A673 (cell line): ENCODE measurements at regions of chr1 and their contacts with region 1.

Region 1: GRCh38 chr1:77143529-77144121 is 75.6 kb downstream of the PIGK start:
- DNase-seq: peak; percentile 18
- H3K4me3 ChIP-seq: no peak overlapping the region
- H3K27ac ChIP-seq: no peak overlapping the region
- H3K4me1 ChIP-seq: peaks cover 4% of the 10 kb centered on the region
- H3K27me3 ChIP-seq: no peaks in the 10 kb centered on the region
- CTCF ChIP-seq: peak; percentile 63

Region 2: DNA sequence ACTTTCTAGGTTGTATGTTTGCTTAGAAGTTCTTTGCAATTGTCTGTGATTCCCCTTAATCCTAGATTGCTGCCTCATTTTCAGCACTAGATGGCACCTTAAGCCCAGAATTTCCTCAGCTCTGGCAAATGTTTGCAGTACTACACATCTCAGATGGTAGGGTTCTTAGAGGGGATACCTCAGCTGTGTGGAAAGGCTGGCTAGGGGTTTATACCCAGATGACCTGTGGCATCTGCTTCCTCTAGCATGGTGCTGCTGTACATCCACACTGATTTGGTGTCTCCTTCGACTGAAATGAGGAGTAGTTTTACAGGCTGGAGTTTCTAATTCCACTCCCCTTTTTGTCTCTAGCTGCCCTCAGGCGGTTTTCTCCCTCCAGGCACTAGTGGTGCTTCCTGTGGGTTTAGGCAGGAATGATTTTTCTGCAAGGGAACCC is 1234.9 kb before region 1 on chr1:
- CTCF ChIA-PET with region 1: no interaction called
- POLR2A ChIA-PET with region 1: no interaction called
- intact Hi-C with region 1: loop called (anchors 5 kb)
- DNase-seq: peak; percentile 62
- H3K4me3 ChIP-seq: no peak overlapping the region
- H3K27ac ChIP-seq: no peak overlapping the region
- H3K4me1 ChIP-seq: no peaks in the 10 kb centered on the region
- H3K27me3 ChIP-seq: no peaks in the 10 kb centered on the region
- CTCF ChIP-seq: peak; percentile 68

Region 3: DNA sequence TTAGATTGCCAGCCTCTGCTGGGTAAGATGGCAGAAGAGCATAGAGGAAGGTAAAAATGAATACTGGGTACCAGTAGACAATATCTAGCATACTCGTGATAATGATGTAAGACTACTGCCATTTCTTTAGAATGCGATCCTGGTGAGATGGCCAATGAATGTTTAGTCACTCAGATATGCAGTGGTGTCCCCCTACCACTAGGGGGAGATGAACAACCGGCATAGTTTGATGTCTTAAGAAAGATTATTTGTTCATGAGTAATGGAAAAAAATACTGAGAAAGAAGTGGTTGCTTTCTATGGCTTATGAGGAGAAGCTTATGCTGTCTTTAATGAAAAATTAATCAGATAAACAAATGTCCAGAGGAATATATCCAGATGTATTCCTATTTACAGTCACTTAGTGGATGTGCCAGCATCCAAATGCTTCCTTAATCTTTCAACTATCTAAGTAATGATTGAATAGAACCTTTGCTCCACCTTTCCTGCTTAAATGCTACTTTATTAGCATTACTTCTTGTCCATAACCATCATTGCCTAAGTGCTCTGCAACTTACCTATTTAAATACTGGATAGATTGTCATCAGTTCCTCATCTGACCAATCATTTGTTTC is 812.5 kb before region 1 on chr1:
- CTCF ChIA-PET with region 1: no interaction called
- POLR2A ChIA-PET with region 1: no interaction called
- intact Hi-C with region 1: loop called (anchors 5 kb)
- DNase-seq: peak; percentile 81
- H3K4me3 ChIP-seq: no peak overlapping the region
- H3K27ac ChIP-seq: no peak overlapping the region
- H3K4me1 ChIP-seq: no peaks in the 10 kb centered on the region
- H3K27me3 ChIP-seq: no peaks in the 10 kb centered on the region
- CTCF ChIP-seq: peak; percentile 96

Region 4: DNA sequence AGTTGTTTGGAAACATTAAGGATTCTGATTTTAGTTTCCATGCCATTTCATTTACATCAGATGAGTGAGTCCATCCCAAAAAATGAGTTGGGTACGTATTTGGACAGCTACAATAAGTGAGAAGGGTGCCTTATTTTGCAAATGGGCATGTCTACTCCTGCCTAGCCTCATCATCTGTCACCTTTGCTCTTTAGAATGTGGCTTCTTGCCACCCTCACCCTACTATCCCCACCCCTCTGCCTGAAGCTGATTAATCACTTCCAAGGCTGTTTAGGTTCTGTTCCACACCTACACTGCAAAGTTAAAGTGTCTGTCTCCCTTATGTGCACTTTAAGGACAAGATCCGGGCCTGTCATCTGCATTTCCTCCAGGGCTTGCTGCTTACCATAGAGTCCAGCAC is 215.1 kb before region 1 on chr1:
- CTCF ChIA-PET with region 1: no interaction called
- POLR2A ChIA-PET with region 1: no interaction called
- intact Hi-C with region 1: no loop called
- DNase-seq: no peak
- H3K4me3 ChIP-seq: no peak overlapping the region
- H3K27ac ChIP-seq: no peak overlapping the region
- H3K4me1 ChIP-seq: no peaks in the 10 kb centered on the region
- H3K27me3 ChIP-seq: peaks cover 36% of the 10 kb centered on the region
- CTCF ChIP-seq: no peak

Region 5: GRCh38 chr1:77126307-77126706 is 17.3 kb before region 1 on chr1:
- CTCF ChIA-PET with region 1: no interaction called
- POLR2A ChIA-PET with region 1: no interaction called
- intact Hi-C with region 1: no loop called
- DNase-seq: peak; percentile 68
- H3K4me3 ChIP-seq: no peak overlapping the region
- H3K27ac ChIP-seq: no peak overlapping the region
- H3K4me1 ChIP-seq: no peaks in the 10 kb centered on the region
- H3K27me3 ChIP-seq: no peaks in the 10 kb centered on the region
- CTCF ChIP-seq: peak; percentile 67

Region 6: GRCh38 chr1:77533660-77534305 is 390.2 kb after region 1 on chr1:
- CTCF ChIA-PET with region 1: no interaction called
- POLR2A ChIA-PET with region 1: no interaction called
- intact Hi-C with region 1: loop called (anchors 2 kb)
- DNase-seq: peak; percentile 74
- H3K4me3 ChIP-seq: no peak overlapping the region
- H3K27ac ChIP-seq: no peak overlapping the region
- H3K4me1 ChIP-seq: peaks cover 4% of the 10 kb centered on the region
- H3K27me3 ChIP-seq: no peaks in the 10 kb centered on the region
- CTCF ChIP-seq: peak; percentile 92

Region 7: DNA sequence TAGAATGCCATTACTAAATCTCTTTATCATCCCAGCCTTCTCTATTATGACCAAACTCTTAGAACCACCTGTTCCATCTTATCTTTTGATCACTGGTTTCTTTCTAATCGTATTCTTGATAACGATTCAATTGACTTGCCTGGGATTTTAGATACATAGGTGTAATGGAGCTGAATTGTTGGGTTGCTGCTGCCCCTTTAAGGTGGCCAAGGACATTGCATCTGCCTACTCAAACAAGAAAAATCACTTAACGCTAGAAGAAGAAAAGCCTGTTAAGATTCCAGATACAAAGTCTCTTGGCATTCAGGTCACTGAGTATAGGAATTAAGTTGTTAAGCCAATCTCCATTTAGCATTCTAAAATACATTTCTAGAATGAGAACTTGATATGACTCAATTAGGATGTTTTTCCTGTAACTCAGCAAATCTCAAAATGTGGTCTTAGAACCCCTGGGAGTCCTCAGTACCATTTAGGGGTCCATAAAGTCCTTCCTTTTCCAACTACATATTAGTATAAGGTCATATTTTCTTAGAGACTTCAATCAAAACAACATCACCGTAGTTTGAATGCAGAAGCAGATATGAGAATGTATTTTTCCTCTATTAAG is 757.2 kb after region 1 on chr1:
- CTCF ChIA-PET with region 1: no interaction called
- POLR2A ChIA-PET with region 1: no interaction called
- intact Hi-C with region 1: loop called (anchors 2 kb)
- DNase-seq: peak; percentile 72
- H3K4me3 ChIP-seq: no peak overlapping the region
- H3K27ac ChIP-seq: no peak overlapping the region
- H3K4me1 ChIP-seq: no peaks in the 10 kb centered on the region
- H3K27me3 ChIP-seq: no peaks in the 10 kb centered on the region
- CTCF ChIP-seq: peak; percentile 84